Dendritic cell treated with granulocyte-macrophage colony-stimulating factor and Interleukin-4, amounts not matched to agents 40 ng/mL and 50 ng/mL, for 4 days (primary cell): ENCODE measurements at regions of chr1 and their contacts with region 1.

Region 1: DNA sequence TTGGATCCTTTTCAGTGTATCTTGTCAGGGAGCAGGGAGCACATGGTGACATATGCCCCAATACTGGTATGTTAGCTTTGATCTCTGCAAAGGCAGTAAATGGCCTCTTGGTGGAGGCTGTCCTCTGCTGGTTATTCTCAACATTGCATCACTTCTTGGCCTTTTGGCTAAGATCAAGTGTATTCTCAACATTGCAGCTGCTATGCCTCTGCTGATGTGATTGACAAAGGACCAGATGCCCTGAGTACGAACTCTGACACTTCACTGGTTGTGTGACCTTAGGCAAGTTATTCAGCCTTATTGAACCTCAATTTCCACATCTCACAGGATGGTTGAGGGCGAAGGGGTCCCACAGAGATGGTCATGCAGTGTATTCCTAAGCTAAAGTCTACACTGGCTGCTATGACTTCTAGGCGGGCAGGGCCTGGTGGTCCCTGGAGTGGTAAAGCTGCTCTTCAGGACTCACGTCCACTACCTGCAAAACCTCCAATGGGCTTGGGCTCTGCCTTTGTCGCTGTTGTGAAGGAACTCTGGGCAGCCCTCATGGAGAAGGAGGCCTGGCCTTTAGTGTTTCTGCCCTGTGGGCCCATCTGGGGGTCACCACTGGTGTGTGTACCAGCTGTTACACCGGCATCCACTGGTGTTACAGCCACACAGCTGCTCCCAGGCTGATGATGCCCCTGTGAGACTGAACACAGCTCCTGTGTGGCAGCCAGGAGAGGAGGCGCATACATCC is 64.8 kb downstream of the DNTTIP2 start:
- H3K4me3 Mint-ChIP-seq: no peak overlapping the region
- H3K27ac Mint-ChIP-seq: no peak overlapping the region
- H3K4me1 Mint-ChIP-seq: peaks cover 52% of the 10 kb centered on the region
- H3K27me3 Mint-ChIP-seq: no peaks in the 10 kb centered on the region

Region 2: DNA sequence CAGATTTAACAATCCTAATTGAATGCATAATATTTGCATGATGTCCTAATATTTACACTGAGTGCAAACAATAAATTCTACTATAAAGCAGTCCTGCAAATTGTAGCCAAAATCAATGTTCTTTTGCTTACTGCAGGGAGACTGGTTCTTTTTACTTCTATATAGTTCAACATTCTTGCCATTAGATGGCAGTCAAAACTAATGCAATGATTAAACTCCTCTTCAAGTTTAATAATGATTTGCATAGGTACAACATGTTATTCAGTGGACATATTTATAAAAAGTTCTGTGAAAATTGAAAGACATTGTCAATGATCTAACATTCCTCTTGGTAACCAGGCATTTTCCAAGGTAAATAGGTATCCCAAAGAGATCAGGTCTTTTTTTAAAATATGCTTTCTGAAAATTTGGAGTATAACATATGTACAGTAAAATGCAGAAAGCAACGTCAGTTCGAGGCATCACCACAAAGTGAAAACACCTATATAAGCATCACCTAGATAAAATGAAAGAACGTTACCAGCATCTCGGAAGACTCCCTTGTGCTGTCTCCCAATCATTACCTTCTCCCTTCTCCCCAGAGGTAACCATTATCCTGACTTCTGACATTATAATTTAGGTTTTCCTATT is 376.1 kb before region 1 on chr1:
- intact Hi-C with region 1: loop called (anchors 10 kb)
- H3K4me3 Mint-ChIP-seq: no peak overlapping the region
- H3K27ac Mint-ChIP-seq: no peak overlapping the region
- H3K4me1 Mint-ChIP-seq: peaks cover 6% of the 10 kb centered on the region
- H3K27me3 Mint-ChIP-seq: peaks cover 10% of the 10 kb centered on the region

Region 3: DNA sequence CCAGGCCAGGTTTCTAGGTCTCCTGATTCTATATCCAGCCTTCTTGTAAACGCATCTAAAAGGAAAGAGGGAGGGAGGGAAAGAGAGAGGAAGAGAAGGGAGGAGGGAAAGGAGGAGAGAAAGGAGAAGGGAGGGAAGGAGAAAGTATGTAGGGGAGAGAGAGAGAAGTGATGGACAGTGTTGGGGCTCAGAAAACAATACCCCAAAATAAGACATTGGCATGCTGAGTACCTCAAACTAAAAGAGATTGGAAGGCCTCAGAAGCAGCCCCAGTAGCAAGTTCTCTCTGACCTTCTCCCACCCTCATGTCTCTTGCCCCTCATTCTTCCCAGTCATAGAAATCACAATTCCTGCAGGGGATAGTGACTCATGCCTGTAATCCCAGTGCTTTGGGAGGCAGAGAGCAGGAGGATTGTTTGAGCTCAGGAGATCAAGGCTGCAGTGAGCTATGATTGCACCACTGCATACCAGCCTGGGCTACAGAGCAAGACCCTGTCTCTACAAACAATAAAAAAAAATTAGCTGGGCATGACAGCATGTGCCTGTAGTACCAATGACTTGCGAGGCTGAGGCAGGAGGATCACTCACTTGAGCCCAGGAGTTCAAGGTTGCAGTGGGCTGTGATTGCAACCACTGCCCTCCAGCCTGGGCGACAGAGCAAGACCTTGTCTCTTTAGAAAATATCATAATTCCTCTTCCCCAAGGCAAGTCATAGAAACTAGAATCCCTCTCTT is 13.6 kb after region 1 on chr1:
- intact Hi-C with region 1: no loop called
- H3K4me3 Mint-ChIP-seq: no peak overlapping the region
- H3K27ac Mint-ChIP-seq: no peak overlapping the region
- H3K4me1 Mint-ChIP-seq: no peaks in the 10 kb centered on the region
- H3K27me3 Mint-ChIP-seq: no peaks in the 10 kb centered on the region